ENCODE measurements at regions of chr1 and their contacts with region 1.

Region 1: DNA sequence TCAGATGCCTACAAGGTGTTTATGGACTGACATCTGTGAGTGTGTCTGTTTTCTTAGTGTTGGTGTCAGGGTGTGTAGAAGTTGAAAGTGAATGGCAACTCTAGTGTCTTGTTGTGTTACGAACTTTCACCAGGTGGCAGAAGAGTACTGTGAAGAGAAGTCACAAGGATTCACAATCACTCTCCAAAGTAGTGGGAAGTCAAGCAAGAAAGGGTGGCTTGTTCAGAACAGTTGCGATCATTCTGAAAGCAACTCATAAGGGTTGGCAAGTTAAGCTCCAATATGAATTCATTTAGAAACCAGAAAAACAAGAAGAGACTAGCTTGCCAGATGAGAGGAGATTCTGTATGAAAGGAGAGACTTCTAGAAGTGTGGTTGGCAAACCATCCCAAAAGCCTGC is 86.1 kb downstream of the FASLG start:
- DNase-seq: peak; percentile 56
- ATAC-seq: peak; percentile 85
- H3K4me3 Mint-ChIP-seq: no peak overlapping the region
- H3K27ac Mint-ChIP-seq: no peak overlapping the region
- H3K4me1 Mint-ChIP-seq: peaks cover 37% of the 10 kb centered on the region
- H3K27me3 Mint-ChIP-seq: peaks cover 9% of the 10 kb centered on the region
- CTCF ChIP-seq: peak; percentile 74

Region 2: GRCh38 chr1:172616195-172616970 is 128.6 kb before region 1 on chr1:
- CTCF ChIA-PET with region 1: no interaction called
- POLR2A ChIA-PET with region 1: no interaction called
- intact Hi-C with region 1: no loop called
- DNase-seq: no peak
- ATAC-seq: no peak
- H3K4me3 Mint-ChIP-seq: no peak overlapping the region
- H3K27ac Mint-ChIP-seq: no peak overlapping the region
- H3K4me1 Mint-ChIP-seq: no peaks in the 10 kb centered on the region
- H3K27me3 Mint-ChIP-seq: no peaks in the 10 kb centered on the region
- CTCF ChIP-seq: no peak

Region 3: GRCh38 chr1:172727956-172728603 is 16.9 kb before region 1 on chr1:
- CTCF ChIA-PET with region 1: interaction called, 52 read pairs
- POLR2A ChIA-PET with region 1: no interaction called
- intact Hi-C with region 1: no loop called
- DNase-seq: peak; percentile 74
- ATAC-seq: peak; percentile 100
- H3K4me3 Mint-ChIP-seq: no peak overlapping the region
- H3K27ac Mint-ChIP-seq: no peak overlapping the region
- H3K4me1 Mint-ChIP-seq: peaks cover 17% of the 10 kb centered on the region
- H3K27me3 Mint-ChIP-seq: peaks cover 6% of the 10 kb centered on the region
- CTCF ChIP-seq: peak; percentile 97

Region 4: GRCh38 chr1:172818841-172819527 is 74.0 kb after region 1 on chr1:
- CTCF ChIA-PET with region 1: interaction called, 20 read pairs
- POLR2A ChIA-PET with region 1: interaction called, 4 read pairs
- intact Hi-C with region 1: loop called (anchors 2 kb)
- DNase-seq: peak; percentile 88
- ATAC-seq: peak; percentile 97
- H3K4me3 Mint-ChIP-seq: peak overlapping the region; percentile 43
- H3K27ac Mint-ChIP-seq: peak overlapping the region; percentile 83
- H3K4me1 Mint-ChIP-seq: peaks cover 47% of the 10 kb centered on the region
- H3K27me3 Mint-ChIP-seq: peaks cover 14% of the 10 kb centered on the region
- CTCF ChIP-seq: no peak

Region 5: DNA sequence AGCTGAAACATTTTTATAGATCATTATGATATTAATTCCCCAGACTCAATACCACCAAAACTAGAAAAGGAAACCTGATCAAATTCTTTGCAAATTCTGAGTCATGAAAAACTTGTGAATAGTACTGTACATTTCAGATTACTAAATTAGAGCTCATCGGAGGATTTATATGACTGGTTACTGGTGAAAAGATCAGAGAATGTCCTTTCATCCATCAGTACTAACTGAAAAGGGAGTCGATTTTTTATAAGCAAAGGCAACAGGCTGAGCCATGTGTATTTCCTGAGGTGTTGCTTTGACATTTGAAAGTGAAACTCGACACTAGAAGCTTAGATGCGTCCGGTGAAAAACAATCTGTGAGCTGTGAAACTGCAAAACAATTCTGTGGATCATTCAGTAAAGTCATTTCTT is 150.0 kb after region 1 on chr1:
- CTCF ChIA-PET with region 1: interaction called, 15 read pairs
- POLR2A ChIA-PET with region 1: no interaction called
- intact Hi-C with region 1: loop called (anchors 5 kb)
- DNase-seq: peak; percentile 48
- ATAC-seq: peak; percentile 82
- H3K4me3 Mint-ChIP-seq: peak overlapping the region; percentile 64
- H3K27ac Mint-ChIP-seq: peak overlapping the region; percentile 44
- H3K4me1 Mint-ChIP-seq: peaks cover 48% of the 10 kb centered on the region
- H3K27me3 Mint-ChIP-seq: no peaks in the 10 kb centered on the region
- CTCF ChIP-seq: no peak

Region 6: GRCh38 chr1:172917972-172918371 is 173.0 kb after region 1 on chr1:
- CTCF ChIA-PET with region 1: no interaction called
- POLR2A ChIA-PET with region 1: no interaction called
- intact Hi-C with region 1: no loop called
- DNase-seq: no peak
- ATAC-seq: no peak
- H3K4me3 Mint-ChIP-seq: no peak overlapping the region
- H3K27ac Mint-ChIP-seq: no peak overlapping the region
- H3K4me1 Mint-ChIP-seq: no peaks in the 10 kb centered on the region
- H3K27me3 Mint-ChIP-seq: no peaks in the 10 kb centered on the region
- CTCF ChIP-seq: no peak

Region 7: GRCh38 chr1:173190101-173190906 is 445.3 kb after region 1 on chr1:
- CTCF ChIA-PET with region 1: interaction called, 11 read pairs
- POLR2A ChIA-PET with region 1: no interaction called
- intact Hi-C with region 1: no loop called
- DNase-seq: peak; percentile 16
- ATAC-seq: no peak
- H3K4me3 Mint-ChIP-seq: no peak overlapping the region
- H3K27ac Mint-ChIP-seq: no peak overlapping the region
- H3K4me1 Mint-ChIP-seq: peaks cover 8% of the 10 kb centered on the region
- H3K27me3 Mint-ChIP-seq: no peaks in the 10 kb centered on the region
- CTCF ChIP-seq: no peak

Region 8: DNA sequence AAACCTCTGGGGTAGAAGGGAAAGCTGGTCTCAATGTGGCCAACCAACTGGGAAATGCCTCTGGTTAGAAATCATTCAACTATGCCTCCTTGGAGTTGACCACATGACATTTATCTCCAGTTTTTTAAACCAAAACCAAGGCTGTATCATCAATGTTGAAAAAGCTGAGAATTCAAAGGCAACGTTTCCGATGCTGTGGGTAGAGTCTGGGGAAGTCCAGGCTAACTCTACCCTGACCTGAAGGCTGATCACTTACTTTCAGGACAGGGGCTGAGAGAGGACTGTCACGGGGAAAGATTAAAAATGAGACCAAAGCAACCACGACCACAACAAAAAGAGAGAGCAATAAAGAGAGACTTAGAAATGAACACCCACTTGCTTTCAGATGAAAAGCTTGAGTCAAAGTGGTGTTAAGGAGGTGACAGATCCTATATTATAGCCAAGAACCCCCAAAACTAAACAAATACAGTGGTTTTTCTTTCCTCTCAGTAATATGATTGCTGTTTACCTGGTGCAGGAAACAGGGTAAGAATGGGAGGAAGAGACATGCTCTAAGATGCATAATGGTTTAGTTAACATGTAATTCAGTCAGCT is 552.9 kb after region 1 on chr1:
- CTCF ChIA-PET with region 1: no interaction called
- POLR2A ChIA-PET with region 1: no interaction called
- intact Hi-C with region 1: loop called (anchors 10 kb)
- DNase-seq: peak; percentile 84
- ATAC-seq: peak; percentile 93
- H3K4me3 Mint-ChIP-seq: no peak overlapping the region
- H3K27ac Mint-ChIP-seq: peak overlapping the region; percentile 25
- H3K4me1 Mint-ChIP-seq: peaks cover 61% of the 10 kb centered on the region
- H3K27me3 Mint-ChIP-seq: no peaks in the 10 kb centered on the region
- CTCF ChIP-seq: no peak

Region 9: DNA sequence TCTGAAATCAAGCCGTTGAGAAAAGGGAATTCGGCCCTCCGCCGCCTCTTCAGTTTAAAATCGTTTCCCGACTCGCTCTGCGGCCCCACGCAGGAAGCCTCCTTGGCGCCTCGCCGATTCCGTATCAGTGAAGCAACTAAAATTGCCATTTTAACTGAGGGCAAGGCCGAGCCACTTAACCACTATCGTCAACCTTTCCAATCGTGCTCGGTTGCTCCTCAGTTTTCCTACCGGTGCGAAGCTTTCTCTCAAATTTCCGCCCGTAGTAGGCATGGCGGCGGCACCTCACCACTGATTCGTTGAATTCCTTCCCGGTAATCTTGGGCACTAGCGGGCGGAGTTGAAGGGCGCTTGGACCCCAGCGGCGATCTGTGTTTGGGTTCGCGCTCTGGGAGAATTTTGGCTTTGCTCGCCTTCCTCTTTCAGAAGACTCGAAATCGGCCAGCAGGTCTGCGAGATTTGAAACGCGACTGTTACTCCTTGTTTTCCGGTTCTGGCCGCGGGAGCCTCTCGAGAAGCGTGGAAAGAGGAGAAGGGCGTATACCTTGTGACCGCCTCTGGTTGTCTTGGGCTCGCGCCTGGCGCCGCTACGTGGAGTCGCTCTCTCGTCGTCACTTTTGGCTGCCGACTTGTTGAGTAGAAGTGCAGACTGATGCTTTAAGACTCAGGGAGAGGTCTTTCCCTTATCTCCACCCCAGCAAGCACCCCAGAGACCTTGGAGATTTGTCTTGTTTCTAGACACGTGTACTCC is 1079.5 kb after region 1 on chr1 and contains the starts of genes CENPL and DARS2:
- CTCF ChIA-PET with region 1: no interaction called
- POLR2A ChIA-PET with region 1: no interaction called
- intact Hi-C with region 1: loop called (anchors 10 kb)
- DNase-seq: peak; percentile 95
- ATAC-seq: peak; percentile 90
- H3K4me3 Mint-ChIP-seq: peak within 1 kb of the TSS; percentile 94
- H3K27ac Mint-ChIP-seq: peak within 1 kb of the TSS; percentile 99
- H3K4me1 Mint-ChIP-seq: peaks cover 50% of the 10 kb centered on the region
- H3K27me3 Mint-ChIP-seq: no peaks in the 10 kb centered on the region
- CTCF ChIP-seq: no peak
- total RNA-seq, gene CENPL: 20.9 to 23.3 TPM
- total RNA-seq, gene DARS2: 46.7 to 49.5 TPM

Measured in activated CD8-positive, alpha-beta T cell treated with anti-CD3 and anti-CD28 coated beads for 36 hours (primary cell).